Motor neuron (in vitro differentiated cells): ENCODE measurements at regions of chr1 and their contacts with region 1.

Region 1: DNA sequence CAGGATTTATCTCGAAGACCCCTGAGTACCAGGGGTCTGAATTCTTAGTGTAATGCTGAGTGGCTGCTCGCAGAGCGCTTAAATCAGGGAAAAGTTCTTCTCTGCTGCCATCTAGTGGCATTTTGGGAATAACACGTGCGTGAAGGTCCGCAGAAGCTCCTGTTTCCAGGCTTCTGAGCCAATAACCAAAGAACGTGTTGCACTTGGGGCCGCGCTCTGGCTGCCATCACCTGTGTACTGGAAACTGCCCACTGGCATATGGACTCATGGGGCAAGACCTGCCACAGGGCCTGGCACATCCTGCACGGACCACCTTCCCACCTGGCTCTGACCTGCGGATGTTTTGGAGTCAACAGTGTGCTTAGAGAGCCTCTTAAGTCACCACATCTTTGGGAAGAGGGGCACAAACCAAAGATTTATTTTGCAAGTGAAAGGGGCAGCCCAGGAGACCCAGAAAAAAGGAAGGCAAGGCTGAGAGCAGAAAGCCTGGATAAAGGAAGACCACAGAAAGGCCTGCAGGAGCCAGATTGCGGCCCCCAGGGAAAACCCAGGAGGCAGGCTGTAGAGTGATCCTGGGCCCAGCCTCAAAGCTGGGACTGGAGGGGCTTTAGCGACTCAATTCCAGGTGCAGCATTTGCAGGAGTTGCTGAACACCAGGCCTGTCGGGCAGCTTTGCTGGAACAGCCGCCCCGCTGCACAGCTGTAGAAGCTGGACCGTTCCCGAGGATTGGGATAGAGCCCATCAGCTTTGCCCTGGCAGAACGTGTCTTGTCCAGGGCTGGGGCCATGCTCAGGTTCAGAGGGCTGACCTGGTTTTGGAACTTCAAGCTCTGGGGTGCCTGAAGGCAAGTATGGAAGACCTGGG is 13.0 kb downstream of the CHIT1 start:
- ATAC-seq: peak; percentile 76 to 92 (median 88)
- H3K4me3 ChIP-seq: no peak overlapping the region
- H3K27ac ChIP-seq: no peak overlapping the region
- H3K4me1 ChIP-seq: no peaks in the 10 kb centered on the region

Region 2: GRCh38 chr1:203026031-203026989 is 190.2 kb before region 1 on chr1 and contains the start of gene PPFIA4:
- in situ Hi-C with region 1: loop called in 8 of 9 experiments (anchors 10 to 25 kb)
- ATAC-seq: peak; percentile 75 to 93 (median 80)
- H3K4me3 ChIP-seq: peak within 1 kb of the TSS; percentile 49 to 68 (median 56)
- H3K27ac ChIP-seq: peak within 1 kb of the TSS in 1 of 2 donors; percentile 34
- H3K4me1 ChIP-seq: peaks cover 25 to 27% of the 10 kb centered on the region in 2 donors
- total RNA-seq, gene PPFIA4: 1.5 to 34.3 (median 10.7) TPM

Region 3: DNA sequence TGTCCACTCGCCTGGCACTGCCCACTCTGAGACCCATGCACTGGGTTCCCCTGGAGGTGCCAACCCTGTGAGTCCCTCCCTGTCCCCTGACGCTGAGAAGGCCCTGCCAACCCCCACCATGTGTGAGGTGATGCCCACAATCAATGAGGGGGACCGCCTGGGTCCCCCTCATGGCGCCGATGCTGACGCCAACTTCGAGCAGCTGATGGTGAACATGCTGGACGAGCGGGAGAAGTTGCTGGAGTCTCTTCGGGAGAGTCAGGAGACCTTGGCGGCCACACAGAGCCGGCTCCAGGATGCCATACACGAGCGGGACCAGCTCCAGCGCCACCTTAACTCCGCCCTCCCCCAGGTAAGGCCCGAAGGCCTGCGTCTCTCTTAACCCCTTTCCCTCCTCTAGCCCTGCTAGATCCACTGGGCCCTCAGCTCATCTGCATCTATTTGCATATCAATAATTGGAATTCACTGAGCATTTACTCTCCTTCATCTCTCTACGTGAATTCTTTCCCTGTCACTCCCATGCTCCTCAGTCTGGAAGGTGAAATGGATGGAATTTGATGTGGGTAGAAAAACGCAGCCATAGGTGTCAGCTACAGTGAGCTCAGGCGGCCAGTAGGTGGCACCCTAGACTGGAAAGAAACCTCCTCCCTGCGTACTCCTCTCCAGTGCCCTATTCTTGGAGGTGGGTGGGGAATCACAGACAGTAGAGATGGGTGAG is 177.5 kb before region 1 on chr1:
- in situ Hi-C with region 1: loop called in 8 of 9 experiments (anchors 10 to 25 kb)
- ATAC-seq: peak; percentile 82 to 96 (median 88)
- H3K4me3 ChIP-seq: no peak overlapping the region
- H3K27ac ChIP-seq: no peak overlapping the region
- H3K4me1 ChIP-seq: peaks cover 7% of the 10 kb centered on the region in 2 donors

Region 4: DNA sequence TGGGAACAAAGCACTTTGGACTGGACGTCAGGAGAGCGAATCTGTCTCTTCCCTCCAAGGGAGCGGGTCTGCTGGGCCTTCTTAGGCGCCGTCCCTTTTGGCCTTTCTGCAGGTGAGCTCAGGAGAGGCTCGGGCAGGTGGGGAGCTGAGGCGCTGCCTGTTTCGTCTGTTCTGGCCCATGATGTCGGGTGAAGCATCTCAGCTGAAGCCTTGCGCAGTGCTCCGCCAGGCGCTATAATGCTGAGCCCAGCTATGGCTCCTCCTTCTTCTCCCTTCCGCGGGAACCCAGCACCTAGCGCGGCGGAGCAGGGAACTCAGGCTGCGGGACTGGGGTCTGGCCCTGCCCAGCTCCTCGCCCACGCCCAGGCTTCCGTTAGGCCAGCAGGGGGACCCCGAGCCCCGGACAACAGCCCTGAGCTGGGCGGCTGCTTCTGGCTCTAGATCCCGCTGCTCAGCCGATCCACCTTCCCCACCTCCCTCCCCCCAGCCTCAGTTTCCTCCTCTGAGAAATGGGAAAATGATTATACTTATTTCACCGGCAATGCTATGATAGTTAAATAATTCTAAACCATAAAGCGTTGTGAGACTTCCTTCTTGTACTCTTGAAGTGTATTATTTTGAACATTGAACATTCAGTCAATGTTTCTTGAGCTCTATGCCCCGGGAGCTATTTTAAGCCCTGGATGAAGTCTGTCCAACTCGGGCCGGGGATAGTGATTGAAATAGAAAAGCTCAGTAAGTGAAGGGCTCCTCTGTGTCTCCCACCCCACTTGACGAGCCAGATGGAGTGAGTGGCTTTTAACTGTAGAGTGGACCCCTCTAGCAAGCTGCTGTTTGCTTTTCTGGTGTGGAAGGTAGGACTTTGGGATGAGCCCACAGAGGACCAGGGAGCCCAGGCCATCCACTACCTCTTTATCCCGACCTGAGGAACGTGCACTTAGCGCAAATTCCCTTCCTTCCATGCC is 98.6 kb before region 1 on chr1:
- in situ Hi-C with region 1: loop called in 3 of 9 experiments (anchors 10 to 25 kb)
- ATAC-seq: peak; percentile 96 to 99 (median 98)
- H3K4me3 ChIP-seq: no peak overlapping the region
- H3K27ac ChIP-seq: no peak overlapping the region
- H3K4me1 ChIP-seq: no peaks in the 10 kb centered on the region

Region 5: DNA sequence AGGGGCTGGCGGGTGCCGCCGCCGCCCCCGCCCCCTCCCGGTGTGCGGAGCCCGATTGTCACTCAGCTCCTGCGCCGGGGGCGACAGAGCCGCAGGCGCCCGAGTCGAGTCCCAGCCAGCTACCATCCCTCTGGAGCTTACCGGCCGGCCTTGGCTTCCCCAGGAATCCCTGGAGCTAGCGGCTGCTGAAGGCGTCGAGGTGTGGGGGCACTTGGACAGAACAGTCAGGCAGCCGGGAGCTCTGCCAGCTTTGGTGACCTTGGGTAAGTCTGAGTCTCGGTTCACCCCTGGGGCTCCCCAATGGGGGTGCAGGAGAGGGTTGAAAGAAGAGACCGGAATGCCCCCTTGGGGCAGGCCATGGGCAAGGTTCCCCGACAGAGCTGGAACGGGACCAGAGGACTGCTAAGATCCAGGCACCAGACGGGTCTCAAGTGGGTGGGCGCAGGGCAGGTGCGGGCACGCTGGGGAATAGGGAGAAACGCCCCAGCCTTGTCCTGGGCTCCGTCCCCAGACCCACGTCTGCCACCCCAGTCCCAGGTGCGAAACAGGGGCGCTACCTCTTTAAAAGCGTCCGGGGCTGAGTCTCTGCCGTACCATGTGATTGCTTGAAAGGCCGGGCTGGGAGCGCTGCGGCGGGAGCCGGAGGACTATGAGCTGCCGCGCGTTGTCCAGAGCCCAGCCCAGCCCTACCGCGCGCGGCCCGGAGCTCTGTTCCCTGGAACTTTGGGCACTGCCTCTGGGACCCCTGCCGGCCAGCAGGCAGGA is 88.7 kb before region 1 on chr1 and contains the start of gene ADORA1:
- in situ Hi-C with region 1: loop called in 2 of 9 experiments (anchors 10 to 25 kb)
- ATAC-seq: peak; percentile 94 to 99 (median 96)
- H3K4me3 ChIP-seq: peak within 1 kb of the TSS; percentile 31 to 39 (median 34)
- H3K27ac ChIP-seq: no peak within 1 kb of the TSS
- H3K4me1 ChIP-seq: peaks cover 19 to 23% of the 10 kb centered on the region in 2 donors
- total RNA-seq, gene ADORA1: 3.2 to 15.5 (median 3.9) TPM